Pancreas (tissue), 10 donors: ENCODE measurements at regions of chr11 and their contacts with region 1.

Region 1: GRCh38 chr11:75147875-75148263 is 3.0 kb upstream of the SLCO2B1 start:
- DNase-seq: peak in 1 of 6 donors; percentile 43
- ATAC-seq: no peak
- H3K4me3 ChIP-seq: no peak overlapping the region
- H3K27ac ChIP-seq: no peak overlapping the region
- H3K4me1 ChIP-seq: peaks cover 0 to 10% (median 4%) of the 10 kb centered on the region in 3 donors
- H3K27me3 ChIP-seq: no peaks in the 10 kb centered on the region
- CTCF ChIP-seq: no peak

Region 2: GRCh38 chr11:75195121-75195551 is 47.3 kb after region 1 on chr11:
- intact Hi-C with region 1: loop called in 2 of 3 experiments (anchors 5 kb)
- DNase-seq: peak in 1 of 6 donors; percentile 64
- ATAC-seq: peak in 3 of 4 donors; percentile 60 to 76 (median 73)
- H3K4me3 ChIP-seq: no peak overlapping the region
- H3K27ac ChIP-seq: no peak overlapping the region
- H3K4me1 ChIP-seq: no peaks in the 10 kb centered on the region
- H3K27me3 ChIP-seq: no peaks in the 10 kb centered on the region
- CTCF ChIP-seq: no peak